CD8-positive, alpha-beta T cell (primary cell): ENCODE measurements at regions of chr20 and their contacts with region 1.

Region 1: DNA sequence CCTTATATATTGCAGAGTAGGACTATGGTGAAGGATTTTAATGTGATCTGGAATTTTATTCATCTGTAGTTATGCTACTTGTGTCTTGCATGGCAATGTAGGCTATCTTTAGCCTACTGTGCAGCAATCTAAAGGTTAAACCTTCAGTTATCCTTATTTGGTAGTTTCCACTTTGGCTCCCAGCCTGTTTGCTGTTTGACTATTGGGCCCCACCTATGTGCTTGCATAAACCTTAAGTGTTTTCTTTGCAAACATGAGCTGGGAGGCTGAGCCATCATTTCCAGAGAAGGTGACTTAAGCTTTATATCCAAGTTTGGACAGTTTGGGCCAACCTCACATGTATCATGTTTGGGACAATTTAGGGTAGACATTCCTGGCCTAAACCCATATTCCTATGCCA is 537.5 kb downstream of the BTBD3 start:
- DNase-seq: no peak
- ATAC-seq: no peak
- H3K4me3 ChIP-seq: no peak overlapping the region
- H3K4me3 Mint-ChIP-seq: no peak overlapping the region
- H3K27ac ChIP-seq: no peak overlapping the region
- H3K27ac Mint-ChIP-seq: no peak overlapping the region
- H3K4me1 ChIP-seq: no peaks in the 10 kb centered on the region
- H3K4me1 Mint-ChIP-seq: no peaks in the 10 kb centered on the region
- H3K27me3 ChIP-seq: no peaks in the 10 kb centered on the region
- H3K27me3 Mint-ChIP-seq: no peaks in the 10 kb centered on the region
- CTCF ChIP-seq: no peak

Region 2: GRCh38 chr20:12371990-12372389 is 83.2 kb before region 1 on chr20:
- CTCF ChIA-PET with region 1: no interaction called
- POLR2A ChIA-PET with region 1: no interaction called
- intact Hi-C with region 1: loop called in 1 of 2 experiments (anchors 10 kb)
- DNase-seq: no peak
- ATAC-seq: no peak
- H3K4me3 ChIP-seq: no peak overlapping the region
- H3K4me3 Mint-ChIP-seq: no peak overlapping the region
- H3K27ac ChIP-seq: no peak overlapping the region
- H3K27ac Mint-ChIP-seq: no peak overlapping the region
- H3K4me1 ChIP-seq: no peaks in the 10 kb centered on the region
- H3K4me1 Mint-ChIP-seq: no peaks in the 10 kb centered on the region
- H3K27me3 ChIP-seq: no peaks in the 10 kb centered on the region
- H3K27me3 Mint-ChIP-seq: no peaks in the 10 kb centered on the region
- CTCF ChIP-seq: no peak

Region 3: GRCh38 chr20:12512755-12513154 is 57.6 kb after region 1 on chr20:
- CTCF ChIA-PET with region 1: no interaction called
- POLR2A ChIA-PET with region 1: no interaction called
- intact Hi-C with region 1: loop called in 1 of 2 experiments (anchors 10 kb)
- DNase-seq: no peak
- ATAC-seq: no peak
- H3K4me3 ChIP-seq: no peak overlapping the region
- H3K4me3 Mint-ChIP-seq: no peak overlapping the region
- H3K27ac ChIP-seq: no peak overlapping the region
- H3K27ac Mint-ChIP-seq: no peak overlapping the region
- H3K4me1 ChIP-seq: no peaks in the 10 kb centered on the region
- H3K4me1 Mint-ChIP-seq: no peaks in the 10 kb centered on the region
- H3K27me3 ChIP-seq: no peaks in the 10 kb centered on the region
- H3K27me3 Mint-ChIP-seq: no peaks in the 10 kb centered on the region
- CTCF ChIP-seq: no peak

Region 4: GRCh38 chr20:12775041-12775440 is 319.9 kb after region 1 on chr20:
- CTCF ChIA-PET with region 1: no interaction called
- POLR2A ChIA-PET with region 1: no interaction called
- intact Hi-C with region 1: no loop called
- DNase-seq: no peak
- ATAC-seq: no peak
- H3K4me3 ChIP-seq: no peak overlapping the region
- H3K4me3 Mint-ChIP-seq: no peak overlapping the region
- H3K27ac ChIP-seq: no peak overlapping the region
- H3K27ac Mint-ChIP-seq: no peak overlapping the region
- H3K4me1 ChIP-seq: no peaks in the 10 kb centered on the region
- H3K4me1 Mint-ChIP-seq: no peaks in the 10 kb centered on the region
- H3K27me3 ChIP-seq: no peaks in the 10 kb centered on the region
- H3K27me3 Mint-ChIP-seq: no peaks in the 10 kb centered on the region
- CTCF ChIP-seq: no peak